ENCODE measurements at regions of chr12 and their contacts with region 1.

Region 1: DNA sequence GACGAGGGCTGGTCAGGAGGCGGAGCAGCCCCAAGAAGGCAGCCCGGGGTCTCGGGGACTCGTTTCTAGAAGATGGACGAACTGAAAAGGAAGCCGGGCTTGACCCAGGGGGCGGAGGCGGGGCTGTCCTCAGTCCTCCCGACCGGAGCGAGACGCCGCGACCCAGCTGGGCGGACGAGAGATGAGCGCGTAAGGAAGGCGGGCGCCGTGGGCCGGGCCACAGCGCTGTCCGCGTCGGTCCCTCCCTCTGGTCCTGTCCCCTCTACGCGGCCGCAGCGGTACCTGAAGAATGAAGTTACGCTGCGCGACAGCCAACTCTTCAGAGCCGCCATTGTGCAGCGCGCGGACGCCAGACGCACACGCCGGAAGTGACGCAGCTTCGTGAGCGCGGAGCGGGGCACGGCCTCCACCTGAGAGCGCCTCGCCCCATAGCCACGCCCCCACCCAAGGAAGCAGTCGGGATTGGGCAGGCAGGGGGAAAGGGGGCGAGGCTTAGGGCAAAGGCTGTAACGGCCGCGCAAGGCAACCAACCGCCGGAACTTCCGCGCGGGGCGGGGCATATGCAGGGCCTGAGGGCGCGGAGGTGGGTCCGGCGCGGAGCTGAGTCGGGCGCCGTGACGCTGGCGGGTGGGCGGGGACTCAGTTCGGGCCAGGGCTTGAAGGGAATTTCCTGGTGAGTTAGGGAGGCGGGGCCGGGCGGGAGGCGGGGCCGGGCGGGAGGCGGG is at the start of gene DIABLO:
- DNase-seq: peak; percentile 100
- ATAC-seq: peak; percentile 96
- H3K4me3 Mint-ChIP-seq: peak within 1 kb of the TSS; percentile 89
- H3K27ac Mint-ChIP-seq: peak within 1 kb of the TSS; percentile 91
- H3K4me1 Mint-ChIP-seq: peaks cover 24% of the 10 kb centered on the region
- H3K27me3 Mint-ChIP-seq: no peaks in the 10 kb centered on the region; the same call in 1 of the 2 replicates
- CTCF ChIP-seq: no peak
- total RNA-seq, gene DIABLO: 57.3 to 62.4 TPM (median 61.7 TPM) in 3 replicates

Region 2: DNA sequence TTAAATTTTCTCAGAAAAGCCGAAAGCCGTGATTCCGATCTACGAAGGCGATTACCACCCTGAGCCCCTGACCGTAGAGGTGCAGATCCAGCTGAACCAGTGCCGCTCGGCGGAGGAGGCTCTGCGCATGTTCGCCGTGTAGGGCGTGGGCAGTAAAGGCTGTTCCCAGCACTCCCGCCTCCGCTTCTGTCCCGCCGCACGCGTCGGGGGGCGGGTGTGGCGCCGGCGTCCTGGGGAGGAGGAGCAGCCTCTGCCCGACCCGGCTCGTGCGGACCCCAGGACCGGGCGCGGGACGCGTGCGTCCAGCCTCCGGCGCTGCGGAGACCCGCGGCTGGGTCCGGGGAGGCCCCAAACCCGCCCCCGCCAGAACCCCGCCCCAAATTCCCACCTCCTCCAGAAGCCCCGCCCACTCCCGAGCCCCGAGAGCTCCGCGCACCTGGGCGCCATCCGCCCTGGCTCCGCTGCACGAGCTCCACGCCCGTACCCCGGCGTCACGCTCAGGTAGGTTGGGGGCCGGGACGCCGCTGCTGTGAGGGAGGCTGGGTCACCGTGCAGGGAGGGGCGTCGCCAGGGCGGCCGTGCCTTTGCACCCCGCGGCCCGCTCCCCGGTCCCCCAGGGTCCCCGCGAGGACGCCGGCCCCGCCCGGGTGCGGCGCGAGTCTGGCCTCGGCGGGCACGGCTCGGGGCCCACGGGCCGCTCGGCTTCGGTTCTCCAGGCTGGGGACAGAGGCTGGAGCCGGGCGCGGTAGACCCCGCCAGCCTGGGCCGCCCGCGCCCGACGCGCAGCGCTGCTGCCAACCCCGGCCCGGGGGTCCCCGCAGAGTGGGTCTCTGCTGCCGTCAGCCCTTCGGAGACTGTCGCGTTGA is 22.3 kb before region 1 on chr12 and contains the start of gene B3GNT4:
- CTCF ChIA-PET with region 1: no interaction called
- POLR2A ChIA-PET with region 1: interaction called, 15 read pairs
- DNase-seq: peak; percentile 73
- ATAC-seq: peak; percentile 53
- H3K4me3 Mint-ChIP-seq: peak within 1 kb of the TSS; percentile 74
- H3K27ac Mint-ChIP-seq: no peak within 1 kb of the TSS
- H3K4me1 Mint-ChIP-seq: peaks cover 22% of the 10 kb centered on the region
- H3K27me3 Mint-ChIP-seq: peaks cover 47% of the 10 kb centered on the region
- CTCF ChIP-seq: no peak
- total RNA-seq, gene B3GNT4: 1.6 to 2.0 TPM (median 1.6 TPM) in 3 replicates